ENCODE measurements at regions of chr3 and their contacts with region 1.

Region 1: DNA sequence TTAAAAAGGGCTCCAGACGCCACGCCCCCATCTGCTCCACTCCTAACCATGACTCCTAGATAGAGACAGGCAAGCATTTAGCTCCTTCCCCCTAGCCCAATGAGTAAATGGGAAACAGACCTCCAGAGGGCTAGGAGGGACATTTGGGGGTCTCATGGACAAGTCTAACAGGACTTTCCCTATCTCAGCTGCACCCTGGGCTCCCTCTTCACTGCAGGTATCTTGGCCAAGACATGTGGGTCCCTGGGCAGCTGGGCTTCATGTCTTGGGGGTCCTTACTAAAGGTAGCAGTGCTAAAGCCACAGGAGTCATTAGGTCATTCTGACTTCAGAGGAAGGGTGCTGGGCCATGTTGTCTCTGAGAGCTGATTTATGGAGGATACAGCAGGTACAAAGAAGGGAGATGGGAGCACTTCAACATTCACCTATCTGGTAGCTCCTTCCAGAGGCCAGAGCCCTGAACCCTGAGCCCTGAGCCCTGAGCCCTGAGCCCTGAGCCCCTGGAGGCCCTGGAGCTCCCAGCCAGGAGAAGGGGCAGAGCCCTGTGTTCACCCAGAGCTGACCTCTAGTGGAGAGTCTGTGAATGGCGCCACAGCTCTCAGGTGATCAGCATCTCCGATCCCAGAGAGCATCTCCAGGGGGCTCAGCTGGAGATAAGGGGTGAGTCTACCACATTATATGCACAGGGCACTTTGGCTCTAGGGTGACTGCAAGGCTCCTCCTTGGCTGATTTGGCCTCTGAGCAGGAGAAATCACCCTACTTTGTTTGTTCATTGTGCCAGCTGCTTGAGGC is 40.1 kb upstream of the EPHB1 start:
- DNase-seq: peak; percentile 44 to 72
- ATAC-seq: peak; percentile 73 to 81 (median 76)
- H3K4me3 ChIP-seq: no peak overlapping the region
- H3K27ac ChIP-seq: no peak overlapping the region
- H3K4me1 ChIP-seq: peaks cover 17% of the 10 kb centered on the region
- H3K27me3 ChIP-seq: no peaks in the 10 kb centered on the region
- CTCF ChIP-seq: peak; percentile 69

Region 2: GRCh38 chr3:134392336-134392983 is 362.5 kb before region 1 on chr3:
- intact Hi-C with region 1: no loop called
- DNase-seq: no peak
- ATAC-seq: peak; percentile 50 to 73 (median 62)
- H3K4me3 ChIP-seq: no peak overlapping the region
- H3K27ac ChIP-seq: no peak overlapping the region
- H3K4me1 ChIP-seq: no peaks in the 10 kb centered on the region
- H3K27me3 ChIP-seq: peaks cover 0 to 4% (median 2%) of the 10 kb centered on the region in 3 donors
- CTCF ChIP-seq: no peak

Region 3: DNA sequence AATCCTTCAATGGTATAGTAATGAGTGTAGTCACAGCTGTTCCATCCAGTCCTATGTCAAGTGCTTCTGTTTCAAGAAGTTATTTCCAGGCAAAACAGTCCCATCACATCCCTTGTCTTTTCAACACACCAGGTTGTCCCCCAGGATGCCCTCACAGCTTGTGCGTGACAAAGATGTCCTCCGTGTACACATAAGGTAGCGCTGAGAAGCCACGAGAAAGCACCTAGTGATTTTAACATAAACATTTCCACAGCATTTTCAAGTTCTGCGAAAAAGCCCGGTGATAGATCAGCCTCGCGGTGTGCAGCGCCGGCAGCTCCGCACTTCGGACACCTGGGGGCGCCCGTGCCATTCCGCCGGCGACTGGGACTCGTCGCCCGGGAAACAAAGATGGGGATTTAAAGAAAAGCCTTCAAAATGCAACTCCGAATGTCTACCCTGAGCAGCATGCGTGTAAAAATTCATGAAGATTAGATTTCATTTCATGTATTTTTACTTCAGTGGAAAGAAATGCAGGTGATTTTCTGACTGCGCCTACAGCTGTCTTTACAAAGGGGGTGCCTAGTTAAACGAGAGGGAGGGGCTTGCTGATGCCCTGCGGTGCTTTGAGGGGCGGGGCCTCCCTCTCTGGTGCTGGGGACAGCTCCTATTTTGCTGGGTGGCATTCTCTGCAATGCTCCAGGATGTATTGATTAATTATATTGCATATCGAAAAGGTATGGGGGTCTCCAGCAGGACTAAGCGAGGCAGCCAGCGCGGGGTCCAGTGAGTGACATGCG is 154.1 kb before region 1 on chr3:
- intact Hi-C with region 1: loop called (anchors 1 to 5 kb)
- DNase-seq: peak; percentile 59 to 78
- ATAC-seq: peak; percentile 76 to 92 (median 79)
- H3K4me3 ChIP-seq: no peak overlapping the region
- H3K27ac ChIP-seq: no peak overlapping the region
- H3K4me1 ChIP-seq: no peaks in the 10 kb centered on the region
- H3K27me3 ChIP-seq: no peaks in the 10 kb centered on the region
- CTCF ChIP-seq: peak; percentile 98

Region 4: GRCh38 chr3:134630506-134630905 is 124.5 kb before region 1 on chr3:
- intact Hi-C with region 1: loop called in 1 of 2 experiments (anchors 5 kb)
- DNase-seq: no peak
- ATAC-seq: peak in 3 of 4 donors; percentile 71 to 86 (median 83)
- H3K4me3 ChIP-seq: no peak overlapping the region
- H3K27ac ChIP-seq: no peak overlapping the region
- H3K4me1 ChIP-seq: no peaks in the 10 kb centered on the region
- H3K27me3 ChIP-seq: no peaks in the 10 kb centered on the region
- CTCF ChIP-seq: peak; percentile 53

Region 5: GRCh38 chr3:134777341-134777740 is 22.4 kb after region 1 on chr3:
- intact Hi-C with region 1: no loop called
- DNase-seq: no peak
- ATAC-seq: no peak
- H3K4me3 ChIP-seq: no peak overlapping the region
- H3K27ac ChIP-seq: no peak overlapping the region
- H3K4me1 ChIP-seq: no peaks in the 10 kb centered on the region
- H3K27me3 ChIP-seq: no peaks in the 10 kb centered on the region
- CTCF ChIP-seq: no peak

Measured in psoas muscle (tissue), 8 donors.